Caco-2 (cell line): ENCODE measurements at regions of chr6 and their contacts with region 1.

Region 1: DNA sequence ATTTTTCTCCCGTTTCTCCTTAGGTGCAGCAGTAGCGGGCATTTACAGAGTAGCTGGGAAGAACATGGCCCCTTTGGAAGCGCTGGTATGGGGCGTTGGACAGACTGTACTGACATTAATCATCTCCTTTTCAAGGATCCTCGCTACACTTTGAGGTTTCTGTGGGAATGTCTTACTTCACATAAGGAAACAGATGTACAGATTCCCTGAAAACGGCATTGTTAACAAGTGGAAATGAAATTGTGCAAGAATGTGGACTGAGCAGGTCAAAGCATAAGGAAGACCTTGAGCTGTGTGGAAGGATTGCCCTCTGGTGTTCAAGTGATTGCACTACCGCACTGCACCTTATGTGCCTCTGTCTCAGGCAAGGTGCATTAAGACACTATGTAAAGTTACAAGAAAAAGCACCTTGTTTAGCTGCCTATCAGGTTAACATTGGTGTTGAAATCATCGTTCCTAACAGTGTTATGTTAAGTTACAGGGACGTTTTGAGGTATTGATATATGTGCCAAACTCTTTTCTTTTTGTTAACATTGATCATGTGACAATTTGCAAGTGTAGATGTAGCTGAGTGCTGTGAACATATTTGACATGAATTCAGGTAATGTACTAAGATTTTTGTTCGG is 38.0 kb downstream of the TMEM170B start:
- DNase-seq: peak; percentile 73 to 76
- H3K4me3 ChIP-seq: peak overlapping the region; percentile 30
- H3K4me3 Mint-ChIP-seq: peak overlapping the region; percentile 64
- H3K27ac Mint-ChIP-seq: peak overlapping the region; percentile 24
- H3K4me1 ChIP-seq: no peaks in the 10 kb centered on the region
- H3K4me1 Mint-ChIP-seq: peaks cover 7% of the 10 kb centered on the region
- H3K27me3 ChIP-seq: no peaks in the 10 kb centered on the region
- H3K27me3 Mint-ChIP-seq: no peaks in the 10 kb centered on the region
- CTCF ChIP-seq: peak; percentile 85 to 91

Region 2: DNA sequence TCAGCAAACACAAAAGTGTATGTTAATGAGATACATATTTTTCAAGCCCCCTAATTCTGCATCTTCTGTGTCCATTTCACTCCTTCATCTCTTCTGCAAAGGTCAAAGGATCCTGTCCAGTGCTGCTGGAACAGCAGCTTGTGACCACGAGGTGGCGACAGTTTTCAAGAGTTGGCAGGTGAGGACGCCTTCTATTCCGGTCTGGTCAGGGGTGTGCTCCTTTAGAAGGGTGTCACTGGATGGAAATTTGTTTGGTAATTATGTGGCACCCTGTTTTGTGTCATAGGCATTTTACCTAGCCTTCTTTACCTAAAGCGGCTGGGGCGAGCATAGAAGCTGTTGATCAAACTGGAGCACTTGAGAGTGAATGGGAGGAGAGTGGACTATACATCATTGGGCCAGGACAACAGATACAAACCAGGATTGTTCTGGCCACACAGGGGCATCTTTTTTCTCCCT is 431.1 kb before region 1 on chr6:
- CTCF ChIA-PET with region 1: interaction called, 5 read pairs
- POLR2A ChIA-PET with region 1: no interaction called
- intact Hi-C with region 1: loop called (anchors 1 kb)
- DNase-seq: peak; percentile 76 to 83
- H3K4me3 ChIP-seq: no peak overlapping the region
- H3K4me3 Mint-ChIP-seq: no peak overlapping the region
- H3K27ac Mint-ChIP-seq: peak overlapping the region; percentile 31
- H3K4me1 ChIP-seq: peaks cover 10% of the 10 kb centered on the region; the same call in 1 of the 2 replicates
- H3K4me1 Mint-ChIP-seq: peaks cover 19% of the 10 kb centered on the region
- H3K27me3 ChIP-seq: no peaks in the 10 kb centered on the region
- H3K27me3 Mint-ChIP-seq: no peaks in the 10 kb centered on the region
- CTCF ChIP-seq: peak; percentile 93 to 94

Region 3: DNA sequence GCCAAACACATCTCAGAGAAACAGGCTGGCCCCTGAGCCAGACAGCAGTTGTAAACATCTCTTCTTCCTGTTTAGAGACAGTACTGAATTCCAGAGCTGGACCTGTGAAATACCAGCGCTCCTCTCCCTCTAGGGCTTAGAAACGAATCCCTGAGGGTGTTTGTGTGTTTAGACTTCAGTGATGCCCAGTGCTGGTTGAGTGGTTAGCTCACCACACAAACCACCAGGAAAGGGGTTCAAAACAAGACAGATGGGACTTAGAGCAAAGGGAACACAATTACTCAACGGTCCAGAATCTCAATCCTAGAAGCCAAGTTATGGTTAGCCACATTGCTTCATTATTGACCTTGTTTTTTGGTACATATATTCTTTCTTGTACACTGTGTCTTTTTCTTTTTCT is 146.6 kb before region 1 on chr6:
- CTCF ChIA-PET with region 1: no interaction called
- POLR2A ChIA-PET with region 1: no interaction called
- intact Hi-C with region 1: no loop called
- DNase-seq: no peak
- H3K4me3 ChIP-seq: no peak overlapping the region
- H3K4me3 Mint-ChIP-seq: no peak overlapping the region
- H3K27ac Mint-ChIP-seq: peak overlapping the region; percentile 62
- H3K4me1 ChIP-seq: peaks cover 73% of the 10 kb centered on the region
- H3K4me1 Mint-ChIP-seq: peaks cover 59% of the 10 kb centered on the region
- H3K27me3 ChIP-seq: no peaks in the 10 kb centered on the region
- H3K27me3 Mint-ChIP-seq: no peaks in the 10 kb centered on the region
- CTCF ChIP-seq: no peak